T-cell (primary cell): ENCODE measurements at regions of chr5 and their contacts with region 1.

Region 1: GRCh38 chr5:119340597-119341218 is 15.1 kb upstream of the TNFAIP8 start:
- DNase-seq: peak in 32 of 35 experiments; percentile 38 to 75 (median 55)
- ATAC-seq: peak; percentile 61 to 66 (median 64)
- H3K4me3 ChIP-seq: peak overlapping the region; percentile 37 to 53
- H3K4me3 Mint-ChIP-seq: peak overlapping the region; percentile 71 to 89 (median 77)
- H3K27ac ChIP-seq: peak overlapping the region; percentile 91
- H3K27ac Mint-ChIP-seq: peak overlapping the region; percentile 95 to 98
- H3K4me1 ChIP-seq: peaks cover 90 to 97% of the 10 kb centered on the region in 2 experiments
- H3K4me1 Mint-ChIP-seq: peaks cover 94 to 96% (median 96%) of the 10 kb centered on the region in 3 donors
- H3K27me3 ChIP-seq: no peaks in the 10 kb centered on the region
- H3K27me3 Mint-ChIP-seq: no peaks in the 10 kb centered on the region

Region 2: GRCh38 chr5:118883396-118883795 is 457.3 kb before region 1 on chr5:
- CTCF ChIA-PET with region 1: no interaction called
- POLR2A ChIA-PET with region 1: no interaction called
- DNase-seq: no peak
- ATAC-seq: no peak
- H3K4me3 ChIP-seq: no peak overlapping the region
- H3K4me3 Mint-ChIP-seq: no peak overlapping the region
- H3K27ac ChIP-seq: no peak overlapping the region
- H3K27ac Mint-ChIP-seq: no peak overlapping the region
- H3K4me1 ChIP-seq: no peaks in the 10 kb centered on the region
- H3K4me1 Mint-ChIP-seq: no peaks in the 10 kb centered on the region
- H3K27me3 ChIP-seq: no peaks in the 10 kb centered on the region
- H3K27me3 Mint-ChIP-seq: no peaks in the 10 kb centered on the region

Region 3: GRCh38 chr5:119267958-119268386 is 72.7 kb before region 1 on chr5:
- CTCF ChIA-PET with region 1: interaction called, 3 to 11 read pairs
- POLR2A ChIA-PET with region 1: interaction called in 1 of 2 experiments, 4 read pairs
- DNase-seq: peak; percentile 55 to 93 (median 81)
- ATAC-seq: peak; percentile 55 to 73 (median 60)
- H3K4me3 ChIP-seq: peak overlapping the region; percentile 87 to 98
- H3K4me3 Mint-ChIP-seq: peak overlapping the region; percentile 98 to 100 (median 100)
- H3K27ac ChIP-seq: peak overlapping the region; percentile 86
- H3K27ac Mint-ChIP-seq: peak overlapping the region; percentile 97 to 99
- H3K4me1 ChIP-seq: peaks cover 28 to 29% of the 10 kb centered on the region in 2 experiments
- H3K4me1 Mint-ChIP-seq: peaks cover 55 to 75% (median 61%) of the 10 kb centered on the region in 3 donors
- H3K27me3 ChIP-seq: no peaks in the 10 kb centered on the region
- H3K27me3 Mint-ChIP-seq: no peaks in the 10 kb centered on the region

Region 4: DNA sequence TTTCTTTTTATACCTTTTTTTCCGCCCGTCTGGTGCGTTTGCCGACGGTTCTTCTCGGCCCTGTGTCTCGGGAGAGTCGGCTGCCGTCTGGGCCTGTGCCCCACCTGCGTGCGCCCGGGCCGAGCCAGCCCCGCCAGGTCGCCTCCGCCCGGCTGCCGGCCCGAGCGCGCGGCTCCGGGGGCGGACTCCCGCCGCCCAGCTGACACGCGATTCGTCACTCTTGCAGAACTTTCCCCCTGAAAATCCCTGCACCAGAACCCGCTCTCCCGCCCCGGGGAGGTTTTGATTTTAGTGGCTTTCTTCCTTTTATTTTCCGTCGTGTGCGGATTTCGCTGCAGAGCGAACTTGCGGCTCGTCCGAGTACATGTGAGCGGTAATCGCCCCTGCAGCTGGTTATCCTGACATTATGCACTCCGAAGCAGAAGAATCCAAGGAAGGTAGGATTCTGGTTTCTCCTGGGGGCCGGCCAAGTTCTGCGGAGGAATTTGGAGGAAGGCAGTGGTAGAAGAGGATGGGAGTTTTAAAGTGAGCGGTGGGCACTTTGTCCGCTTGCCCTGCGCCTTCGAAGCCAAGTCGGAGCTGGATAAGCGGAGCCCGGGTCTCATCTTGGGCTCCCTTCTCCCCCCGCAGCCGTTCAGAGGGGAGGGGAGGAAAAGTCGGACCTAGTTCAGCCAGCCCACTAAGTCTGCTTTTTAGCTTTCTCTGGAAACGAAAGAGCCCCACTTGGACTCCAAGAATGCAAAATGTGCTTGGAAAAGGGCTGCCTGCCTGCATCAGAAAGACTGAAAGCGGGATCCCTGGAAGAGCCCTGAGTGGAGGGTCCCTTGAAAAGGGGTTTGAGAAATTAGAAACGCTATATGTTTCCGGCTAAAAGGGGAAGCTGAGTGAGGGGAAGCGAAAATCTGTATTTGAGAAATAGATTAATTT is 15.2 kb after region 1 on chr5 and contains the start of gene TNFAIP8:
- CTCF ChIA-PET with region 1: interaction called, 5 to 17 read pairs
- POLR2A ChIA-PET with region 1: interaction called, 4 to 18 read pairs
- DNase-seq: peak in 12 of 35 experiments; percentile 10 to 70 (median 30)
- ATAC-seq: peak; percentile 46 to 64 (median 58)
- H3K4me3 ChIP-seq: peak within 1 kb of the TSS; percentile 39 to 48
- H3K4me3 Mint-ChIP-seq: peak within 1 kb of the TSS; percentile 87 to 91 (median 88)
- H3K27ac ChIP-seq: peak within 1 kb of the TSS; percentile 65
- H3K27ac Mint-ChIP-seq: peak within 1 kb of the TSS; percentile 89 to 95
- H3K4me1 ChIP-seq: peaks cover 60 to 66% of the 10 kb centered on the region in 2 experiments
- H3K4me1 Mint-ChIP-seq: peaks cover 86 to 95% (median 94%) of the 10 kb centered on the region in 3 donors
- H3K27me3 ChIP-seq: no peaks in the 10 kb centered on the region
- H3K27me3 Mint-ChIP-seq: no peaks in the 10 kb centered on the region
- total RNA-seq, gene TNFAIP8: 128 to 145 (median 135) TPM

Region 5: DNA sequence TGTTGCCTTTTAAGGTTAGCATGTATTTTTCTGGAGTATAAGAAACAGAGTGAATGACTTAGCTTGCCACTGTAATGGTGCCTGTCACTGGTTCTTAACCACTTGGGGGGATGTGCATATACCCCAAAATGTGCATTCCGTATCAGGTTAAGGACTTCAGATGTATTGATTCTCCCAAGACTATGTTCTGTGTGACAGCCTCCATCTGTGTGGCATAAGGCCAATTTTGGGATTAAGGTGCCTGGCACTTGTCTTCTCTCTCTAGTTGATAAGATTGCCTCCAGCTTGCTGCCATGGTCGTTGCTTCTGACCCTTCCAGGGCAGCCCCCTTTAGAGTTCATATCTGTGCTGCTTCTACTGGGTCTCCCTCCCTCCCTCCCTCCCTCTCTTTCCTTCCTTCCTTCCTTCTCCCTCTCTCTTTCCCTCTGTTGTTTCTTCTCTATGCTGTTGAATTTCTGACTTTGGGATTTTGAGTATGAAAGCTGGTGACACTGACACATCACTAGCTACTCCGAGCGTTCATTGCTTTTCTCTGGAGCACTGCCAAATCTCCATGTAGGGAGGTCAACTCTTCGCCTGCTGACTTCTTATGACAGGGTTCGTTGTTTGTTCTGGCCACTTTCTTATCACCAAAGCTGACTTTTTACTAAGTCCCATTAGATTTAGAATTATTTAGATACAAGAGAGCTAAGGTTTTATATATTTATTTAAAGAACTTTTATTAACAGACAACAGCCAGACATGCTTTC is 46.1 kb after region 1 on chr5:
- CTCF ChIA-PET with region 1: interaction called in 1 of 2 experiments, 3 read pairs
- POLR2A ChIA-PET with region 1: interaction called, 4 to 17 read pairs
- DNase-seq: no peak
- ATAC-seq: no peak
- H3K4me3 ChIP-seq: no peak overlapping the region
- H3K4me3 Mint-ChIP-seq: peak overlapping the region in 1 of 3 donors; percentile 2
- H3K27ac ChIP-seq: no peak overlapping the region
- H3K27ac Mint-ChIP-seq: peak overlapping the region; percentile 84 to 91
- H3K4me1 ChIP-seq: peaks cover 30 to 34% of the 10 kb centered on the region in 2 experiments
- H3K4me1 Mint-ChIP-seq: peaks cover 92 to 95% (median 94%) of the 10 kb centered on the region in 3 donors
- H3K27me3 ChIP-seq: no peaks in the 10 kb centered on the region
- H3K27me3 Mint-ChIP-seq: no peaks in the 10 kb centered on the region

Region 6: DNA sequence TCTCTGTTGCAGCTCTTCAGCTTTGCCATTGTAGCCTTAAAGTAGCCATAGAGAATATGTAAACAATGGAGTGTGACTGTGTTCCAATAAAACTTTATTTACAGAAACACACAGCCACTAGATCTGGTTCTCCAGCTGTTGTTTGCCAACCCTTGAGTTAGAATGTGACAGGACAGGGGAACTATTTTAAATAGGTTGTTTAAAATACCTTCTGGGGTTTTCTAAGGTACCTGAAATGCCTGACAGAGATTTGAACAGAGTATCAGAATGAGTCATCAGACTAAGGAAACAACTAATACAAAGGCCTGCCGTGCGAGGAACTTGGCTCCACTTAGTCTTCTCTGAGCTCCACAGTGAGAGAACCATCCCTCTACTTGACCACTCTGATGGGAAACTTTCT is 197.0 kb after region 1 on chr5:
- CTCF ChIA-PET with region 1: no interaction called
- POLR2A ChIA-PET with region 1: no interaction called
- DNase-seq: no peak
- ATAC-seq: no peak
- H3K4me3 ChIP-seq: no peak overlapping the region
- H3K4me3 Mint-ChIP-seq: no peak overlapping the region
- H3K27ac ChIP-seq: no peak overlapping the region
- H3K27ac Mint-ChIP-seq: no peak overlapping the region
- H3K4me1 ChIP-seq: no peaks in the 10 kb centered on the region
- H3K4me1 Mint-ChIP-seq: no peaks in the 10 kb centered on the region
- H3K27me3 ChIP-seq: no peaks in the 10 kb centered on the region
- H3K27me3 Mint-ChIP-seq: no peaks in the 10 kb centered on the region